ENCODE measurements at regions of chr20 and their contacts with region 1.

Region 1: GRCh38 chr20:57236813-57237584 is 29.4 kb downstream of the BMP7 start:
- DNase-seq: no peak
- ATAC-seq: no peak
- H3K4me3 Mint-ChIP-seq: no peak overlapping the region
- H3K27ac Mint-ChIP-seq: no peak overlapping the region
- H3K4me1 Mint-ChIP-seq: no peaks in the 10 kb centered on the region
- H3K27me3 Mint-ChIP-seq: peaks cover 22% of the 10 kb centered on the region
- CTCF ChIP-seq: no peak

Region 2: DNA sequence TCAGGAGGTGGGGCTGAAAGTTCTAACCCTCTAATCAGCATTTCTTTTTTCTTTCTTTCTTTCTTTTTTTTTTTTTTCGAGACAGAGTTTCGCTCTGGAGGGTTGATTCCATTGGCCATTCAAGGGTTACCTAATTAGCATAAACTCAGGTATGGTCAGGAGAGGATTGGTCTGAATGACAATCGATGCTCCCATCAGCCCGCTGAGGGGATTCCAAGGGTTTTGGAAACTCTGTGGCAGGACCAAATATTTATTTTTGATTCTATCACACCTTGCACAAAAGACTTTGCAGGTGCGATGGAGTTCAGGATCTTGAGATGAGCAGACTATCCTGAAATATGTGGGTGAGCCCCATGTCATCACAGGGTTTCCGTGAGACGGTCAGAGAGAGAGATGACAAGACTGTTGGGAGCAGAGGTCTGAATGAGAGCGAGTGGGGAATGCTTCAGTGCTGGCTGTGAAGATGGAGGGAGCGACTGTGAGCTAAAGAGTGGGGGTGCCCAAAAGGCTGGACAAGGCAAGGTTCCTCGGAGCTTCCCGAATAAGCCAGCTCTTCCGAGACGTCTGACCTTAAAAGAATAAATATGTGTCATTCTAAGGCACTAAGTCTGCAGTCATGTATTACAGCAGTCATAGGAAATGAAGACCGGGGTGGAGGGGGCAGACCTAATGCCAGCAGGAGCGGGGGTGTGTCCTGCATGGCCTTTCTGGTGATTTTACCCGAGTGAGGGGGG is 77.6 kb before region 1 on chr20:
- CTCF ChIA-PET with region 1: no interaction called
- POLR2A ChIA-PET with region 1: no interaction called
- intact Hi-C with region 1: loop called (anchors 2 kb)
- DNase-seq: no peak
- ATAC-seq: no peak
- H3K4me3 Mint-ChIP-seq: no peak overlapping the region
- H3K27ac Mint-ChIP-seq: no peak overlapping the region
- H3K4me1 Mint-ChIP-seq: no peaks in the 10 kb centered on the region
- H3K27me3 Mint-ChIP-seq: no peaks in the 10 kb centered on the region
- CTCF ChIP-seq: no peak

Region 3: GRCh38 chr20:57266291-57267157 is 29.5 kb after region 1 on chr20 and contains the start of gene BMP7:
- CTCF ChIA-PET with region 1: no interaction called
- POLR2A ChIA-PET with region 1: no interaction called
- intact Hi-C with region 1: no loop called
- DNase-seq: no peak
- ATAC-seq: no peak
- H3K4me3 Mint-ChIP-seq: no peak within 1 kb of the TSS
- H3K27ac Mint-ChIP-seq: no peak within 1 kb of the TSS
- H3K4me1 Mint-ChIP-seq: peaks cover 3% of the 10 kb centered on the region
- H3K27me3 Mint-ChIP-seq: peaks cover 70% of the 10 kb centered on the region
- CTCF ChIP-seq: no peak
- total RNA-seq, gene BMP7: not detected in 2 replicates

Measured in activated B cell treated with CpG ODN at 0.5 μM for 24 hours (primary cell).